A549 (cell line): ENCODE measurements at regions of chr7 and their contacts with region 1.

Region 1: GRCh38 chr7:20172736-20173334 is 44.3 kb downstream of the MACC1 start:
- DNase-seq: peak; percentile 61 to 76
- ATAC-seq: peak; percentile 93 to 99
- H3K4me3 ChIP-seq: no peak overlapping the region
- H3K27ac ChIP-seq: peak overlapping the region in 1 of 2 experiments; percentile 57; a peak in 1 of 6 replicates
- H3K4me1 ChIP-seq: no peaks in the 10 kb centered on the region
- CTCF ChIP-seq: peak; percentile 81
- EP300 ChIP-seq: no peak
- POLR2A ChIP-seq: no peak
- RAD21 ChIP-seq: peak; percentile 94 to 96

Region 2: DNA sequence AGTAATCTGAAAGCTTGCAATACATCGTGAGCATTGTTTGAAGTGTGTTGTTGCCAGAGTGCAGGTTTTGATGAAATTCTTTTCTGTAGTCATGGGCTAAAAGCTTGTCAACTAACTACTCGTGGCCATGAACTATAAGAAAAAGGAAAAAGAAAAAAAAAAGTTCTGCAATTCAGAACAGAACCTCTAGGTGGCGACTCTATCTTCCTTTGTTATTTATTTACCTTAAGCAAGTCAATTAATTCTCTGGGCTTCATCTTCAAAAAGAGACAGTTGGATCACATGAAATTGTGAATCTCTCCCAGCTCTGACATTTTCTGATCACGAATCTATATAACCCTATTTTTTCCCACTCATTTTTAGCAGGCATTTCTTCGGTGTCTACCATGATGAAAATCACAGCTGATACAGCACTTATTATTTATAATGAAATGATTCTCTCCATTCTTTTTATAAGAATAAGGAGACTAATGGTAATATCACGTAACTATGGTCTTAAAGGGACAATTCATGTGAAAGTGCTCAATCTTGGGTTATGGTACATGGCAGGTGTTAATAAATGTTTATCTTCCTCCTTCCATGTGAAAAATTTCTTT is 418.2 kb before region 1 on chr7:
- CTCF ChIA-PET with region 1: interaction called, 21 read pairs
- POLR2A ChIA-PET with region 1: no interaction called
- DNase-seq: peak in 1 of 2 experiments; percentile 49
- ATAC-seq: no peak
- H3K4me3 ChIP-seq: no peak overlapping the region
- H3K27ac ChIP-seq: no peak overlapping the region
- H3K4me1 ChIP-seq: no peaks in the 10 kb centered on the region
- CTCF ChIP-seq: peak; percentile 74
- EP300 ChIP-seq: no peak
- POLR2A ChIP-seq: no peak
- RAD21 ChIP-seq: peak; percentile 76 to 78

Region 3: DNA sequence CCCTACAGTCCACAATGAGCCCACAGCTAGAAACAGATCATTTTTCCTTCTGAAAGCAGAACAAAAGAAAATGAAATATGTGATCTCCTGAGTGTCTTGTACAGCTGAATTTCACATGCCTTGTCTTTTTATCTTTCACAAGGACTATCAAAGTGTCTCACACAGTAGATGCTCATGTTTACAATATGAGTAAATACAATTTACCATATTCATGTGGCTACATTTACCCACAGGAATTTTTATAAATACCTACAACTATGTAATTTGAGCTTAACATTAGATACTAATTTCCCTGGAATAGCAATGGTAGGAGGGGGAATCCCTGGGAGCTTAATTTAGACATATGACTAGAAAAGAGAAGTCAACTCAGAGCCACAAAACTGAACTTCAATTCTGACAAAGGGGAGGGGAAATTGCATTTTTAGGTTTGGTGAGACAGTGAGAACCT is 141.9 kb before region 1 on chr7:
- CTCF ChIA-PET with region 1: no interaction called
- POLR2A ChIA-PET with region 1: no interaction called
- DNase-seq: no peak
- ATAC-seq: no peak
- H3K4me3 ChIP-seq: no peak overlapping the region
- H3K27ac ChIP-seq: no peak overlapping the region
- H3K4me1 ChIP-seq: peaks cover 16% of the 10 kb centered on the region
- CTCF ChIP-seq: no peak
- EP300 ChIP-seq: no peak
- POLR2A ChIP-seq: no peak
- RAD21 ChIP-seq: no peak

Region 4: GRCh38 chr7:20158684-20159083 is 14.2 kb before region 1 on chr7:
- CTCF ChIA-PET with region 1: interaction called, 10 read pairs
- POLR2A ChIA-PET with region 1: no interaction called
- DNase-seq: no peak
- ATAC-seq: no peak
- H3K4me3 ChIP-seq: no peak overlapping the region
- H3K27ac ChIP-seq: no peak overlapping the region
- H3K4me1 ChIP-seq: peaks cover 2% of the 10 kb centered on the region; the same call in 1 of the 3 replicates
- CTCF ChIP-seq: no peak
- EP300 ChIP-seq: no peak
- POLR2A ChIP-seq: no peak
- RAD21 ChIP-seq: no peak